ENCODE measurements at regions of chr2 and their contacts with region 1.

Region 1: GRCh38 chr2:202911512-202912341 is at the starts of genes CARF and WDR12:
- DNase-seq: peak; percentile 94 to 96 (median 94)
- ATAC-seq: peak; percentile 97 to 98 (median 98)
- H3K4me3 ChIP-seq: peak within 1 kb of the TSS; percentile 61 to 85 (median 70)
- H3K27ac ChIP-seq: peak within 1 kb of the TSS; percentile 71 to 98 (median 86)
- H3K4me1 ChIP-seq: peaks cover 0 to 29% (median 17%) of the 10 kb centered on the region in 12 donors
- H3K27me3 ChIP-seq: no peaks in the 10 kb centered on the region
- CTCF ChIP-seq: no peak
- POLR2A ChIP-seq: peak in 1 of 2 donors; percentile 55
- total RNA-seq, gene CARF: 2.2 to 12.2 (median 7.4) TPM
- total RNA-seq, gene WDR12: 12.9 to 56.3 (median 42.3) TPM

Region 2: GRCh38 chr2:203002054-203002821 is 90.5 kb after region 1 on chr2:
- intact Hi-C with region 1: loop called in 1 of 10 experiments (anchors 10 kb)
- DNase-seq: no peak
- ATAC-seq: no peak
- H3K4me3 ChIP-seq: no peak overlapping the region
- H3K27ac ChIP-seq: no peak overlapping the region
- H3K4me1 ChIP-seq: no peaks in the 10 kb centered on the region
- H3K27me3 ChIP-seq: no peaks in the 10 kb centered on the region
- CTCF ChIP-seq: no peak
- POLR2A ChIP-seq: no peak

Region 3: GRCh38 chr2:203014456-203015199 is 102.9 kb after region 1 on chr2 and contains the start of gene NBEAL1:
- intact Hi-C with region 1: loop called in 3 of 10 experiments (anchors 5 to 10 kb)
- DNase-seq: peak; percentile 98 to 99 (median 98)
- ATAC-seq: peak; percentile 98
- H3K4me3 ChIP-seq: peak within 1 kb of the TSS; percentile 78 to 94 (median 87)
- H3K27ac ChIP-seq: peak within 1 kb of the TSS; percentile 90 to 99 (median 95)
- H3K4me1 ChIP-seq: peaks cover 0 to 46% (median 21%) of the 10 kb centered on the region in 12 donors
- H3K27me3 ChIP-seq: no peaks in the 10 kb centered on the region
- CTCF ChIP-seq: no peak
- POLR2A ChIP-seq: peak in 1 of 2 donors; percentile 71
- total RNA-seq, gene NBEAL1: 14.7 to 26.9 (median 18.9) TPM